Left colon (tissue), 2 donors: ENCODE measurements at regions of chrX and their contacts with region 1.

Region 1: DNA sequence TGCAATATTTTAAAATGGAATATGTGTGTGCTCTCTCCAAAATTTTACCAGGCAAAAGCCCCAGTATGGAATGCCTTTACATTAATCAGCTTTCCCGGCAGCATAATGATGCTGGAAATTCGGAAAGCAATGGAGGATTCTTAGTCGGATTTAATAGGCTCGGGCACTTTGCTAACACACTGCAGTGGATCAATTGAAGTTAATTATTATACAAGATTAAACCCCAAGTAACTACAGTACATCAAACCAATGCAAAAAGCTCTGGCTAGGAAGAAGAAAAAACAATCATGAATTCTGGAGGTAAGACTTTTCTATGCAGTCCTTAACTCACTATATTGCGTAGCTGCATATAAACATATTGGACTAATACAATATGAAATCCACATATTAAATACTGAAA is 43.6 kb upstream of the GRIA3 start:
- DNase-seq: no peak
- ATAC-seq: no peak

Region 2: GRCh38 chrX:123108513-123109427 is 31.7 kb before region 1 on chrX:
- intact Hi-C with region 1: loop called in 1 of 2 experiments (anchors 2 kb)
- DNase-seq: no peak
- ATAC-seq: no peak